ENCODE measurements at regions of chr3 and their contacts with region 1.

Region 1: GRCh38 chr3:151265866-151266265 is 12.5 kb downstream of the P2RY14 start:
- DNase-seq: peak; percentile 95
- ATAC-seq: peak; percentile 89
- H3K4me3 ChIP-seq: peak overlapping the region in 1 of 5 experiments; percentile 34
- H3K4me3 Mint-ChIP-seq: peak overlapping the region; percentile 66
- H3K27ac ChIP-seq: peak overlapping the region; percentile 97 to 99
- H3K27ac Mint-ChIP-seq: peak overlapping the region; percentile 99
- H3K4me1 ChIP-seq: peaks cover 44 to 53% of the 10 kb centered on the region in 2 donors
- H3K4me1 Mint-ChIP-seq: peaks cover 66% of the 10 kb centered on the region
- H3K27me3 ChIP-seq: no peaks in the 10 kb centered on the region
- H3K27me3 Mint-ChIP-seq: no peaks in the 10 kb centered on the region
- CTCF ChIP-seq: no peak

Region 2: DNA sequence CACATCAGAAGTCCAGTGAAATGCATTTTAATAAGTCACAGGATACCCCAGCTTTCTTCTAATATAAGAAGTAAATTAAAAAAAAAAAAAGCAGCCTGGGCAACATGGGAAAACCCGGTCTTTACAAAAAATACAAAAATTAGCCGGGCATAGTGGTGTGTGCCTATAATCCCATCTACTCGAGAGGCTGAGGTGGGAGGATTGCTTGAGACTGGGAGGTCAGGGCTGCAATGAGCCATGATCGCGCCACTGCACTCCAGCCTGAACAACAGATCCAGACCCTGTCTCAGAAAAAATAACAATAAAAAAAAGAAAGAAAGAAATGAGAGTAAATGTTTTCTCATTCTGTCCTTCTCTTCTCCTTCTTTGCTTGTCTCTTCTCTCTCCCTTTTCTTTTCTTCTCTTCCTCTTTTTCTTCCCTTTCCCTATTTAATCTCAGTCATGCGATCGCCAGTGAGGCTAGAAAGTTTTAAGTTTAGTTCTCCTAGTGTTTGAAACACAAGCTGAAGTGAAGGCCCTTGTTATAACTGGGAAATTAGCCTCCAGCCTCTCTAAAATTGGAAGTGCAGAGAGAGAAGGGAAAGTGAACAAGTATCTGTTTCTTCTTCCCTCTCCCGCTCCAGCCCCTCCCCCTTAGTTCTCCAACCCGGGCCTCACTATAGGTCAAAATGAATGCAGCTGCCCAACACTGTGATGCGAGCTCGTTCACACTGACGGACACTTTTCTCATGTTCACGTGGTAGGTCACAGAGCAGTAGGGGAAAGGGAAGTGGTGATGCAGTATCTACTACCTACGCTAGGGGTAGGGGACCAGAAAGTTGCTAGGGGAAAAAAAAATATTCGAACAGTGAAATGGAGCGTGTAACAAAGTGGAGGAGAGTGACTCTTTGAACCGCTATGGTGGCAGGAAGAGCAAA is 881.3 kb before region 1 on chr3:
- CTCF ChIA-PET with region 1: no interaction called
- POLR2A ChIA-PET with region 1: no interaction called
- intact Hi-C with region 1: loop called (anchors 10 kb)
- DNase-seq: peak; percentile 89
- ATAC-seq: peak; percentile 94
- H3K4me3 ChIP-seq: peak overlapping the region; percentile 31 to 58 (median 44)
- H3K4me3 Mint-ChIP-seq: peak overlapping the region; percentile 78
- H3K27ac ChIP-seq: peak overlapping the region; percentile 85 to 89
- H3K27ac Mint-ChIP-seq: peak overlapping the region; percentile 86
- H3K4me1 ChIP-seq: peaks cover 20 to 26% of the 10 kb centered on the region in 2 donors
- H3K4me1 Mint-ChIP-seq: peaks cover 38% of the 10 kb centered on the region
- H3K27me3 ChIP-seq: no peaks in the 10 kb centered on the region
- H3K27me3 Mint-ChIP-seq: no peaks in the 10 kb centered on the region
- CTCF ChIP-seq: peak; percentile 60

Region 3: GRCh38 chr3:151210676-151211381 is 55.0 kb before region 1 on chr3:
- CTCF ChIA-PET with region 1: no interaction called
- POLR2A ChIA-PET with region 1: no interaction called
- intact Hi-C with region 1: no loop called
- DNase-seq: peak; percentile 28
- ATAC-seq: peak; percentile 41
- H3K4me3 ChIP-seq: no peak overlapping the region
- H3K4me3 Mint-ChIP-seq: peak overlapping the region; percentile 71
- H3K27ac ChIP-seq: no peak overlapping the region
- H3K27ac Mint-ChIP-seq: no peak overlapping the region
- H3K4me1 ChIP-seq: peaks cover 3 to 6% of the 10 kb centered on the region in 2 donors
- H3K4me1 Mint-ChIP-seq: peaks cover 7% of the 10 kb centered on the region
- H3K27me3 ChIP-seq: no peaks in the 10 kb centered on the region
- H3K27me3 Mint-ChIP-seq: peaks cover 4% of the 10 kb centered on the region
- CTCF ChIP-seq: peak; percentile 31

Region 4: DNA sequence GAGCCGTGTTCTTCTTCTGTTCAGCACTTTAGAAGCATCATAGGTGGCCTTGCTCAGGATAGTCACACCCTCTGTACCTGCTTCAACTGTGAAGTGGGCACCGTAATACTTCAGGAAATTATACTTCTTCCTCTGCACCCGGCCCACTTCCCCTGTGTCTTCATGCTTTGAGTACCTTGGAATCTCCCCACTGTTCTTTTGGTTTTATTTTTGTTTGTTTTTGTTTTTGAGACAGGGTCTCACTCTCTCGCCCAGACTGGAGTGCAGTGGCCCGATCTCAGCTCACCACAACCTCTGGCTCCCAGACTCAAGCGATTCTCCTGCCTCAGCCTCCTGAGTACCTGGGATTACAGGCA is 10.8 kb after region 1 on chr3:
- CTCF ChIA-PET with region 1: interaction called, 115 read pairs
- POLR2A ChIA-PET with region 1: interaction called, 14 read pairs
- intact Hi-C with region 1: loop called (anchors 1 kb)
- DNase-seq: peak; percentile 89
- ATAC-seq: peak; percentile 70
- H3K4me3 ChIP-seq: peak overlapping the region in 4 of 5 experiments; percentile 19 to 57 (median 48)
- H3K4me3 Mint-ChIP-seq: peak overlapping the region; percentile 82
- H3K27ac ChIP-seq: peak overlapping the region; percentile 91 to 96
- H3K27ac Mint-ChIP-seq: peak overlapping the region; percentile 98
- H3K4me1 ChIP-seq: peaks cover 69 to 76% of the 10 kb centered on the region in 2 donors
- H3K4me1 Mint-ChIP-seq: peaks cover 78% of the 10 kb centered on the region
- H3K27me3 ChIP-seq: no peaks in the 10 kb centered on the region
- H3K27me3 Mint-ChIP-seq: no peaks in the 10 kb centered on the region
- CTCF ChIP-seq: no peak

Region 5: DNA sequence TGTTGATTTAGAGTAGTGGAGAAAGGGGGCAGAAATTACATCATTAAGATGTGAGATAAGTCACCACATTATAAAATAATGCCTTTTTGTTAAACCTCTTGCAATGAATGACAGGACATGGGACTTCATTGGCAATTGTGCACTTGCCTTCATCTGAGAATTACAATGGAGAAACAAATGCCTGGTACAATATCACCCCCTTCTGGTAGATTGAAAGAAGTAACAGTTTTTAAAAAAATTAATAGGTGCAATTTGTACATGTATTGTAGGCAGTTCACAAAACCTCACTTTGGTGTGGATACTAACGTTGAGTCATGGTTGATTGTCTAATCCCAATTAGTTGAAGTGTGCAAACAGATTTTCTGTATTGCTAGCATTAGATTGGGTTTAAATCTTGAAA is 17.1 kb after region 1 on chr3:
- CTCF ChIA-PET with region 1: interaction called, 115 read pairs
- POLR2A ChIA-PET with region 1: interaction called, 3 read pairs
- intact Hi-C with region 1: no loop called
- DNase-seq: peak; percentile 78
- ATAC-seq: peak; percentile 17
- H3K4me3 ChIP-seq: no peak overlapping the region
- H3K4me3 Mint-ChIP-seq: no peak overlapping the region
- H3K27ac ChIP-seq: no peak overlapping the region
- H3K27ac Mint-ChIP-seq: no peak overlapping the region
- H3K4me1 ChIP-seq: peaks cover 30 to 31% of the 10 kb centered on the region in 2 donors
- H3K4me1 Mint-ChIP-seq: peaks cover 28% of the 10 kb centered on the region
- H3K27me3 ChIP-seq: no peaks in the 10 kb centered on the region
- H3K27me3 Mint-ChIP-seq: no peaks in the 10 kb centered on the region
- CTCF ChIP-seq: peak; percentile 84

Region 6: DNA sequence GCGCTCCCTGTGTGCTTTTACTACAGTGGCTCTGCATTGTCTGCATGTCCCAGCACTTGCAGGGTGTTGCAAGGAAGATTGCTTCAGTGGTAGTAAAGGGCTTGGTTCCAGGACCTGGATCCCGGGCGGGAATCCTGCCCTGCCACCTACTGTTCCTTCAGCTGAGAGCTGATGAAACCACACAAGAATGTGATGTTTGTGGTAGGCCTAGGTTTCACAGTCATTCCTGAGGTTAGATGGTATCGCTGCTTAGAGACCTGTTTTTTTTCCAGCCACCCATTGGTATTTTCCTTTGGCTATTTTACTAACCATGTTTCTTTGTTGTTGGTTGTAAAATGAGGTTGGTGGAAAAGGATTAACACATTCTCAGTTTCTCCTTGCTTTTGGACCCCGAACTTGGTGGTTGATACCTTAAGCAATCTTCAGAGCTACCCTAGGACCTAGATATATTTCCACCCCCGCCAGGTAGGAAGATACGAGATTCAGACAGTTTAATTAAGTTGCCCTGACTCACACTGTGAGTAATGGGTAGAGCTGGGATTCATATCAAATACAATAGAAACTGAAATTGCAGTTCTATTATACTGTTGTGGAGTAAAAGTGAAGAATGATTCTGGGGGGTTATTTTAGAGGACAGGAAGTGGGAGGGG is 39.4 kb after region 1 on chr3:
- CTCF ChIA-PET with region 1: no interaction called
- POLR2A ChIA-PET with region 1: no interaction called
- intact Hi-C with region 1: no loop called
- DNase-seq: no peak
- ATAC-seq: no peak
- H3K4me3 ChIP-seq: no peak overlapping the region
- H3K4me3 Mint-ChIP-seq: no peak overlapping the region
- H3K27ac ChIP-seq: no peak overlapping the region
- H3K27ac Mint-ChIP-seq: no peak overlapping the region
- H3K4me1 ChIP-seq: no peaks in the 10 kb centered on the region
- H3K4me1 Mint-ChIP-seq: no peaks in the 10 kb centered on the region
- H3K27me3 ChIP-seq: no peaks in the 10 kb centered on the region
- H3K27me3 Mint-ChIP-seq: peaks cover 2% of the 10 kb centered on the region
- CTCF ChIP-seq: no peak

Region 7: DNA sequence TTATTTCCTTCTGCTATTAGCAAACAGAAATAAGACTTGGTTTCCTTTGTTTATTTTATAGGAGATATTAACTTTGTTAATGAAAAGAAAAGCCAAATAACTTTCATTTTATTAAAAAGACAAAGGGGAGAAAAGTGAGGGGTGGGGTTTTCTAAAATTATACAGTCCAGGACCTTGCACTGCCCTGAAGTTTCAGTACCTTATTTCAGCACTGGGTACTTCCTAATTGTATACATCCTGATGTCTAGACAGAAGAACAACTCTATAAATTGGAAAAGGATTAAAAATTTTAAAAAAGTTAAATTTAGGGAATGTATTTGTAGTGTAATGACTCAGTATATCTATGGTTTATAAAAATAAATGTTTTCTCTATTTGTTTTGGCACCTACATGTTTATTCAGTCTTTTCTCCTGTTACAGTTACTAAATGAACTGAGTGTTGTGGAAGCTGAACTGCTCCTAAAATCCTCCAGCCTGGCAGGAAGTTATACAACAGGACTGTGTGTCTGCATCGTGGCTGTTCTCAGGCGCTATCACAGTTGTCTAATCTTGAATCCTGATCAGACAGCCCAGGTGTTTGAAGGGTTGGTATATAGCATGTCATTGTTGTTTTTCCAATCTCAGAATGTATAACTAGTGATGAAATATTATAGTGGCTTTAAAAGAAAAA is 91.1 kb after region 1 on chr3:
- CTCF ChIA-PET with region 1: no interaction called
- POLR2A ChIA-PET with region 1: no interaction called
- intact Hi-C with region 1: no loop called
- DNase-seq: peak; percentile 18
- ATAC-seq: no peak
- H3K4me3 ChIP-seq: no peak overlapping the region
- H3K4me3 Mint-ChIP-seq: no peak overlapping the region
- H3K27ac ChIP-seq: peak overlapping the region in 1 of 2 donors; percentile 2
- H3K27ac Mint-ChIP-seq: peak overlapping the region; percentile 65
- H3K4me1 ChIP-seq: peaks cover 5 to 22% of the 10 kb centered on the region in 2 donors
- H3K4me1 Mint-ChIP-seq: peaks cover 27% of the 10 kb centered on the region
- H3K27me3 ChIP-seq: no peaks in the 10 kb centered on the region
- H3K27me3 Mint-ChIP-seq: no peaks in the 10 kb centered on the region
- CTCF ChIP-seq: no peak

Region 8: GRCh38 chr3:152676810-152677379 is 1411.0 kb after region 1 on chr3:
- CTCF ChIA-PET with region 1: no interaction called
- POLR2A ChIA-PET with region 1: no interaction called
- intact Hi-C with region 1: no loop called
- DNase-seq: no peak
- ATAC-seq: no peak
- H3K4me3 ChIP-seq: no peak overlapping the region
- H3K4me3 Mint-ChIP-seq: no peak overlapping the region
- H3K27ac ChIP-seq: no peak overlapping the region
- H3K27ac Mint-ChIP-seq: no peak overlapping the region
- H3K4me1 ChIP-seq: no peaks in the 10 kb centered on the region
- H3K4me1 Mint-ChIP-seq: no peaks in the 10 kb centered on the region
- H3K27me3 ChIP-seq: peaks cover 0 to 6% (median under 1%) of the 10 kb centered on the region in 4 experiments
- H3K27me3 Mint-ChIP-seq: peaks cover 17% of the 10 kb centered on the region
- CTCF ChIP-seq: no peak

Region 9: GRCh38 chr3:153221748-153222162 is 1955.9 kb after region 1 on chr3:
- CTCF ChIA-PET with region 1: no interaction called
- POLR2A ChIA-PET with region 1: no interaction called
- intact Hi-C with region 1: loop called (anchors 5 kb)
- DNase-seq: peak; percentile 65
- ATAC-seq: peak; percentile 98
- H3K4me3 ChIP-seq: peak overlapping the region; percentile 2 to 50 (median 35)
- H3K4me3 Mint-ChIP-seq: peak overlapping the region; percentile 71
- H3K27ac ChIP-seq: peak overlapping the region; percentile 67 to 75
- H3K27ac Mint-ChIP-seq: peak overlapping the region; percentile 88
- H3K4me1 ChIP-seq: peaks cover 27 to 32% of the 10 kb centered on the region in 2 donors
- H3K4me1 Mint-ChIP-seq: peaks cover 43% of the 10 kb centered on the region
- H3K27me3 ChIP-seq: no peaks in the 10 kb centered on the region
- H3K27me3 Mint-ChIP-seq: no peaks in the 10 kb centered on the region
- CTCF ChIP-seq: no peak